Left colon (tissue), 2 donors: ENCODE measurements at regions of chr4 and their contacts with region 1.

Region 1: GRCh38 chr4:15396157-15396800 is 31.6 kb upstream of the C1QTNF7 start:
- DNase-seq: peak in 1 of 2 donors; percentile 57
- ATAC-seq: peak; percentile 68

Region 2: GRCh38 chr4:15577508-15577907 is 181.2 kb after region 1 on chr4:
- intact Hi-C with region 1: no loop called
- DNase-seq: no peak
- ATAC-seq: no peak

Region 3: DNA sequence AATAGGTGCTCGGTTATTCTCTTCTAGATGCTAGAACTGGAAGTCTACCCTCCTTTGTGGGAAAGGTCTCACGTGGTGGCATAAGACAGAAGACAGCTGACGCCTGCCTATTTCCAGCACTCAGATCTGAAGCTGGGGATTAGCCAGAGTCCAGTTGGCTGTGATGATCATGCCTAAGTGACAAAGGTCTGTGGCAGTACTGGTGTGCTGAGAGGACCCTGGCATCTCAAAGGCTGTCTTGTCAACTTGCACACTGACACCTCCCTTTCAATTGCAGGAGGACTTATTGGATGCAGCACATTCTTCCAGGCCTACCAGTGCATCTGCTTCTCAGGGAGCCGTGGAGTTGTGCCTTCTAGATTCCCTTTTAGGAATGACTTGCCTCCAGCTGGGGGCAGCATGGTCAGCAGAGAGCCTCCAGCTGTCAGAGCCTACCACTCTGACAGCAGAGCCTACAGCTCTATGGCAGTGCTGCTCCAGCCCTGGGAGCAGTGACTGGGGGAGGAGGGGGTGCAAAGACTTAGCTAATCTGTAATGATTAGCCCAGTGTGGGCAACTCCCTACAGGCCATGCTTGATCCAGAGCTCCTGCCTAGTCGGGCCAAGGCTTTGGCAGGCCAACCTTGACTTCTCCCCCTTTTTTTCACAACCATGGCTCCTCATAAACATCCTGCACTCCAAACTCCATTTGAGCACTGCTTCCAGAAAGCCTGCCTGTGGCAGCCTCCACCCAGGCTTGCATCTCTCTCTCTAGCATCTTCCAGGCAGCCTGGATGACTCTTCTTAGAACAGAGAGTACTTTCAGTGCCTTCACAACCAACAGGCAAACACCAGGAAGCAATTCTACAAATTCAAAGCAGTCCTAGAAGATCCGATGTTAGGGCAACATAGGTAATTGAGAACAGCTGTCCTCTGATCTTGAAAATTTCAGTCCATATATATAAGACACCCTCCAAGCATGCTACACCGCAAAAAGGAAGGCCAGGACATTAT is 580.5 kb after region 1 on chr4:
- intact Hi-C with region 1: loop called in 1 of 2 experiments (anchors 5 kb)
- DNase-seq: no peak
- ATAC-seq: peak; percentile 45

Region 4: GRCh38 chr4:16897991-16898827 is 1501.9 kb after region 1 on chr4 and contains the start of gene LDB2:
- intact Hi-C with region 1: no loop called
- DNase-seq: peak; percentile 23 to 42
- ATAC-seq: peak; percentile 18
- total RNA-seq, gene LDB2: 3.1 to 6.9 TPM